ENCODE measurements at regions of chr13 and their contacts with region 1.

Region 1: DNA sequence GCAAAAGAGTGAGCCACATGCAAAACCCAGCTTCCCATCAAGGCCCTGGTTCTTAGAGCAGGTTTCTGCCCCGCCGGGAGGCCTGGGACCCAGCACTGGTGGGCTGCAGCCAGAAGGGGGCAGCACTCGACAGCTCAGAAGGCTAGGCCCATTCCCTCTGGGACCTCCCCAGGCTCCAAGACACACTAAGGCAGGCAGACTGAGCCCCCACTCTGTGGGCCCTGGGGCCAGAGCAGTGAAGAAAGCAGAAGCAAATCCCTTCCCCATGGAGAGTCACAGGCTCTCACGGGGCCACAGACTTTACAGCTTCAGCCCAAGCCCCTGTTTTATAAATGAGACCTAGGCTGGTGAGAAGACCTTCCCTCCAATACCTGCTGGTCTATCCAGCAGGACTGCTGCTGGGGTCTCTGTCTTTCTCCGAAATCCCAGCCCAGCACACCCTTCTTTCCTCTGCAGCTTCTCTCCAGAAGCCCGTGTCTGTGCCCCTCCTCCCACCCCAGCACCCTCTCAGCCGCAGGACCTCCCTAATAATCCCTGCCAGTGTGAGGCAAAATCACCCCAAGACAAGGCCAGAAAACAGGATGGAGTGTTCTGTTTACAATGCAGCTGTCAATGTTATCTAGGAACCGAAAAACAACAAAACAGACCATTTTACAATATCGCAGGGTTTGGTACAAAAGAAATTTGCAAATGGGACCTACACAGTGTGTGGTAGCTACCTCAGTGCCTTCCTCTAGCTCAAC is 109.3 kb downstream of the ABCC4 start:
- DNase-seq: peak; percentile 71
- H3K4me3 ChIP-seq: no peak overlapping the region
- H3K27ac ChIP-seq: no peak overlapping the region
- H3K4me1 ChIP-seq: no peaks in the 10 kb centered on the region
- H3K27me3 ChIP-seq: no peaks in the 10 kb centered on the region
- CTCF ChIP-seq: peak; percentile 90

Region 2: GRCh38 chr13:95378603-95379002 is 186.6 kb after region 1 on chr13:
- intact Hi-C with region 1: loop called (anchors 2 kb)
- DNase-seq: peak; percentile 44
- H3K4me3 ChIP-seq: no peak overlapping the region
- H3K27ac ChIP-seq: peak overlapping the region; percentile 52
- H3K4me1 ChIP-seq: peaks cover 16% of the 10 kb centered on the region
- H3K27me3 ChIP-seq: no peaks in the 10 kb centered on the region
- CTCF ChIP-seq: no peak

Region 3: DNA sequence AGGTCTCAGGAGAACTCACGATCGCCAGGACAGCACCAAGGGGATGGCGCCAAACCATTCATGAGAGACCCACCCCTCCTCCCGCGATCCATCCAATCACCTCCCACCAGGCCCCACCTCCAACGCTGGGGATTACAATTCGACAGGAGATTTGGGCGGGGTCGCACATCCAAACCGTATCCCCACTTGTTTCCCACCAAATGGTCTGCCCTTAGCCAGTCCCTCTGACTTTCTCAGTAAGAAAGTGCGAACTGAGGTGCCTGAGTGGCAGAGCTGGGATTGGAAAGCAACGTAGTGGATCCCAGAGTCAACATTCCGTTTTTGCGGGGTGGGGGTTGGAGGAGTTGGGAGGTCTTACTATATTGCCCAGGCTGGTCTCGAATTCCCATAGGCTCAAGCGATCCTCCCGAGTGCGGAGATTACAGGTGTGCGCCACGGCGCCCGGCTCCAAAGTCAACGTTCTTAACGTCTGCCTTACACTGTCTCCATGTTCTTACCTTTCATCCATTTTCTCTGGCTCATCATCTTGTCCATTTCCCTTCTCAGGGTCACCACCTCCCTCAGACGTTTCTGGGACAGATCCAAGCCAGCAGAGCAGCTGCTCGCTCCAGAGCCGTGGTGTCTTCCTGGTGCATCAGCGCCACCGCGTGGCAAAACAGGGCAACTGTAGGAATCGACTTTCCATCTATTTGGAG is 212.0 kb after region 1 on chr13:
- intact Hi-C with region 1: loop called (anchors 2 kb)
- DNase-seq: peak; percentile 79
- H3K4me3 ChIP-seq: peak overlapping the region; percentile 59
- H3K27ac ChIP-seq: no peak overlapping the region
- H3K4me1 ChIP-seq: peaks cover 8% of the 10 kb centered on the region
- H3K27me3 ChIP-seq: peaks cover 16% of the 10 kb centered on the region
- CTCF ChIP-seq: peak; percentile 95

Measured in left ventricle myocardium inferior (tissue), 1 donor.